MCF 10A (cell line): ENCODE measurements at regions of chr2 and their contacts with region 1.

Region 1: DNA sequence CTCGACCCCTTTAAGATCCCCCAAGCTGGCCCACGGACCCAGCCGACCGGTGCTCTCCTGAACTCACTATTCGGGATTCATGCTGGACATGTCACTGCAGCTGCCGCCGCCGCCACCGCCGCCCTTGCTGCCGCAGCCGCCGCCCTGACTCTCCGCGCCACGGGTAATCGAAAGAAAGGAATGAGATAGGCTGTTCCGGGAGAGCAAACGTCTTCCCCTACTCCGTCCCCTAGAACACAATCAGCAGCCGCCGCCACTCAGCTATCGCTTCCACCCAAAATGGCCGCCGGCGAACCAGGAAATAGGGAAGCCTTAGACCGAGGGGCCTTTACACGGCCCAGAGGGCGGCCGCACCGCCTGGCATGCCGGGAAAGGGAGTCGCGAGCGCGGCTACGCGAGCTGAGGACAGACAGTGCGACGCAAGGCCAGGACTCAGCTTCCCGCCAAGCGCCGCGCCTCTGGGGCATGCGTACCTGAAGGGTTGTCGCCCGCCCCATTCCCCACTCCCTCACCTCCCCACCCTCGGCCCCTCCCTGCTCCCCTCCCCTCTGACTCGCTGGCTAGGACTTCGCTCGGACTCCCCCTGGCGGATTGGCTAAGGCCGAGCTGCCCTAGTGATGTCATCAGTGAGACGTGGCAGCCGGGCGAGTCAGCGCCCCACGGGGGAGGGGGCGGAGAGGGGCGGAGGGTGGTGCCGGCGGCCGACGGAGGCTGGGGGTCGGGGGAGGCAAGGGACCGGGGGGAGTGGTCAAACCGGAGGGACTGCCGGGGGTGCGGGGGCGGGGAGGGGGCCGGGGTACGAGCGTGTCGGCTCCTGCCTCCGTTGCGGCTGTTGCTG is at the start of gene RAB1A:
- DNase-seq: peak; percentile 99
- H3K4me3 Mint-ChIP-seq: peak within 1 kb of the TSS; percentile 84
- H3K27ac Mint-ChIP-seq: peak within 1 kb of the TSS; percentile 97
- H3K4me1 Mint-ChIP-seq: peaks cover 10% of the 10 kb centered on the region
- H3K27me3 Mint-ChIP-seq: no peaks in the 10 kb centered on the region
- CTCF ChIP-seq: peak; percentile 31
- total RNA-seq, gene RAB1A: 128 and 131 TPM in 2 replicates

Region 2: DNA sequence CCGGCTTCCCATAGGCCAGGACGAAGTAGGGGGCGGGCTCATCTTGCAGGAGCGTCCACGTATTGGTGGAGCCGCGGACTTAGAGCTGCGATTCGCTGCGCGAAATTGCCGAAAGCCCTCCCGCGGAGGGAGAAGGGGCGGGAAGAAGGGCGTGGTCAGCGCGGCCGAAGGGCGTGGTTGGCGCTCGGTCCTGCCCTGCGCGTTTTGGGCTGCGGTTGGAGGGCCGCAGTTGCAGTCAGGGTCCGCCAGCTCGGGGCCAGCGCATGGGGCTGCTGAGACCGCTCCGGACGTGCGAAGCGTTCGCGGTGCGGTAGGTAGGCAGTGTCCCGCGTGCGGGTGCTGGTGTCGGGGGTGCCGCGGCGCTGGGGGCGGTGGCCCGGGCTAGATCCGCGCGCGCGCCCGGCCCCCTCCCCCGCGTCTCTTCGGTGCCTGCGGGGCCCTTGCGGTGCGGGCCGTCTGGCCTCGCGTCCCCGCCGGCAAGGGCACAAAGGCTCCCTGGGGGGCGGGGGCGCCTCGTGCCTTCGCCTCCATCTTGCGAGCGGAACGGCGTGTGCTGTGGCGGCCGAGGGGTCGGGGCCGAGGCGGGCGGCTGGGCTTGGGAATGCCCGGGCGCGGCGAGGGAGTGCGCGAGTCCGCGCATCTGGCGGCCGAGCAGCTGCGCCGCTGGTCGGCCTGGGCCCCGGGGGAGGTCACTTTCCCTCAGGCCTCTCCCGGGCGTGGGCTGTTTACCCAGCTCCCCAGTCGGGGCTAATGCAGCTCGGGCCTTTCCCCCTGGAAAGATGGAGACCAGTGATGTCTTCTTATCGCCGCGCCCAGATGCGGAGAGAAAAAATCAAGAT is 73.6 kb before region 1 on chr2 and contains the start of gene CEP68:
- CTCF ChIA-PET with region 1: interaction called, 3 read pairs
- POLR2A ChIA-PET with region 1: interaction called, 57 read pairs
- intact Hi-C with region 1: loop called (anchors 10 kb)
- DNase-seq: peak; percentile 97
- H3K4me3 Mint-ChIP-seq: peak within 1 kb of the TSS; percentile 90
- H3K27ac Mint-ChIP-seq: peak within 1 kb of the TSS; percentile 41
- H3K4me1 Mint-ChIP-seq: peaks cover 10% of the 10 kb centered on the region
- H3K27me3 Mint-ChIP-seq: no peaks in the 10 kb centered on the region
- CTCF ChIP-seq: no peak
- total RNA-seq, gene CEP68: 5.4 and 7.2 TPM in 2 replicates

Region 3: GRCh38 chr2:65064728-65065552 is 65.1 kb before region 1 on chr2:
- CTCF ChIA-PET with region 1: interaction called, 4 read pairs
- POLR2A ChIA-PET with region 1: interaction called, 22 read pairs
- intact Hi-C with region 1: loop called (anchors 10 kb)
- DNase-seq: peak; percentile 90
- H3K4me3 Mint-ChIP-seq: peak overlapping the region; percentile 7
- H3K27ac Mint-ChIP-seq: peak overlapping the region; percentile 65
- H3K4me1 Mint-ChIP-seq: peaks cover 20% of the 10 kb centered on the region
- H3K27me3 Mint-ChIP-seq: no peaks in the 10 kb centered on the region
- CTCF ChIP-seq: peak; percentile 42

Region 4: GRCh38 chr2:65070172-65070830 is 59.7 kb before region 1 on chr2:
- CTCF ChIA-PET with region 1: interaction called, 4 read pairs
- POLR2A ChIA-PET with region 1: interaction called, 22 read pairs
- intact Hi-C with region 1: loop called (anchors 10 kb)
- DNase-seq: peak; percentile 51
- H3K4me3 Mint-ChIP-seq: no peak overlapping the region
- H3K27ac Mint-ChIP-seq: peak overlapping the region; percentile 78
- H3K4me1 Mint-ChIP-seq: peaks cover 24% of the 10 kb centered on the region
- H3K27me3 Mint-ChIP-seq: no peaks in the 10 kb centered on the region
- CTCF ChIP-seq: no peak

Region 5: DNA sequence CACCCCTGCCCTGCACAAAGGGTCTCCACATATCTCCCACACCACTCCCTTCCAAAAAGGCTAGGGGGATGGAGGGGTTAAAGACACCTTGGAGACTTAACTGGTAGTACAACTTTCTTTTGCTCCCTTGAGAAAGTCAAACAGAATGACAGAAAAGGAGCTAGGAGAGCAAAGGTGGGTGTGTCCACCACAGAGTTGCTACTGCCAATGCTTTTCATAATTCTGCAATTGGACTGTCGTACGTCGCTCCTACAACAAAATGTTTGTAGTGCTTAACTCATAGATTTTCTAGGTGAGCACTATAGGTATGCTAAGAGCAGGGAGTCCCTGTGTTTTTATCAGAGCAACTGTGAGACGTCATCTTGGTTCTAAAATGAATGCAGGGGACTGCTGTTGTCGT is 46.9 kb before region 1 on chr2:
- CTCF ChIA-PET with region 1: interaction called, 3 read pairs
- POLR2A ChIA-PET with region 1: interaction called, 19 read pairs
- intact Hi-C with region 1: no loop called
- DNase-seq: no peak
- H3K4me3 Mint-ChIP-seq: no peak overlapping the region
- H3K27ac Mint-ChIP-seq: no peak overlapping the region
- H3K4me1 Mint-ChIP-seq: no peaks in the 10 kb centered on the region
- H3K27me3 Mint-ChIP-seq: no peaks in the 10 kb centered on the region
- CTCF ChIP-seq: no peak

Region 6: DNA sequence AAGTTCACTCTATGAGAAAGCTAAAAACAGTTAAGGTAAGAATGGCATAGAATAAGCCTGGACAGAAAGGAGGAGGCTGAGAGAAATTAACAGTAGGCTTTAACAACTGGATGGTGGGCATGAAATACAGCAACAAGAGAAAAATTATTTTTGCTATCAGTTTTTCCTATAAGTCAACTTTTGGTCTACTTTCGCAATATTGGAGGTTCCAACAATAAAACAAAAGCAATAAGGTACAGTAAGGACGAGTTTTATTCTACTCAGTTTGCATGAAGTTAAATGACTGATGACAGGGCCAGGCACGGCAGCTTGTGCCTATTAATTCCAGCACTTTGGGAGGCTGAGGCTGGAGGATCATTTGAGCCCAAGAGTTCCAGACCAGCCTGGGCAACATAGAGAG is 17.4 kb before region 1 on chr2:
- CTCF ChIA-PET with region 1: interaction called, 5 read pairs
- POLR2A ChIA-PET with region 1: interaction called, 15 read pairs
- intact Hi-C with region 1: no loop called
- DNase-seq: no peak
- H3K4me3 Mint-ChIP-seq: no peak overlapping the region
- H3K27ac Mint-ChIP-seq: no peak overlapping the region
- H3K4me1 Mint-ChIP-seq: peaks cover 6% of the 10 kb centered on the region
- H3K27me3 Mint-ChIP-seq: no peaks in the 10 kb centered on the region
- CTCF ChIP-seq: no peak

Region 7: GRCh38 chr2:65595641-65596040 is 465.6 kb after region 1 on chr2:
- CTCF ChIA-PET with region 1: no interaction called
- POLR2A ChIA-PET with region 1: no interaction called
- intact Hi-C with region 1: no loop called
- DNase-seq: peak; percentile 40
- H3K4me3 Mint-ChIP-seq: no peak overlapping the region
- H3K27ac Mint-ChIP-seq: no peak overlapping the region
- H3K4me1 Mint-ChIP-seq: no peaks in the 10 kb centered on the region
- H3K27me3 Mint-ChIP-seq: no peaks in the 10 kb centered on the region
- CTCF ChIP-seq: no peak